ENCODE measurements at regions of chr1 and their contacts with region 1.

Region 1: GRCh38 chr1:164914208-164914607 is 355.2 kb downstream of the PBX1 start:
- DNase-seq: no peak
- ATAC-seq: peak; percentile 79 to 84 (median 83)
- H3K4me3 ChIP-seq: no peak overlapping the region
- H3K27ac ChIP-seq: no peak overlapping the region
- H3K4me1 ChIP-seq: peaks cover 0 to 13% (median 0%) of the 10 kb centered on the region in 12 donors
- H3K27me3 ChIP-seq: no peaks in the 10 kb centered on the region
- CTCF ChIP-seq: peak in 9 of 12 donors; percentile 31 to 54 (median 43)
- POLR2A ChIP-seq: no peak

Region 2: GRCh38 chr1:163561580-163562295 is 1352.5 kb before region 1 on chr1:
- intact Hi-C with region 1: loop called in 1 of 10 experiments (anchors 10 kb)
- DNase-seq: no peak
- ATAC-seq: peak in 2 of 4 donors; percentile 47 to 63
- H3K4me3 ChIP-seq: no peak overlapping the region
- H3K27ac ChIP-seq: no peak overlapping the region
- H3K4me1 ChIP-seq: no peaks in the 10 kb centered on the region
- H3K27me3 ChIP-seq: no peaks in the 10 kb centered on the region
- CTCF ChIP-seq: peak in 11 of 12 donors; percentile 23 to 64 (median 46)
- POLR2A ChIP-seq: no peak

Region 3: GRCh38 chr1:164558461-164559341 is 355.5 kb before region 1 on chr1 and contains the start of gene PBX1:
- intact Hi-C with region 1: loop called in 2 of 10 experiments (anchors 2 to 10 kb)
- DNase-seq: peak; percentile 97 to 99 (median 98)
- ATAC-seq: peak; percentile 98 to 100 (median 99)
- H3K4me3 ChIP-seq: peak within 1 kb of the TSS; percentile 58 to 88 (median 73)
- H3K27ac ChIP-seq: peak within 1 kb of the TSS; percentile 58 to 87 (median 84)
- H3K4me1 ChIP-seq: peaks cover 0 to 13% (median 5%) of the 10 kb centered on the region in 12 donors
- H3K27me3 ChIP-seq: peaks cover 0 to 6% (median 0%) of the 10 kb centered on the region in 9 donors
- CTCF ChIP-seq: no peak
- POLR2A ChIP-seq: peak in 1 of 2 donors; percentile 91
- total RNA-seq, gene PBX1: 24.0 to 78.2 (median 59.8) TPM

Region 4: GRCh38 chr1:164637461-164638375 is 276.5 kb before region 1 on chr1:
- intact Hi-C with region 1: loop called in 1 of 10 experiments (anchors 10 kb)
- DNase-seq: peak; percentile 56 to 81 (median 63)
- ATAC-seq: peak; percentile 63 to 81 (median 78)
- H3K4me3 ChIP-seq: no peak overlapping the region
- H3K27ac ChIP-seq: peak overlapping the region; percentile 56 to 91 (median 81)
- H3K4me1 ChIP-seq: peaks cover 0 to 89% (median 66%) of the 10 kb centered on the region in 12 donors
- H3K27me3 ChIP-seq: no peaks in the 10 kb centered on the region
- CTCF ChIP-seq: no peak
- POLR2A ChIP-seq: no peak

Region 5: DNA sequence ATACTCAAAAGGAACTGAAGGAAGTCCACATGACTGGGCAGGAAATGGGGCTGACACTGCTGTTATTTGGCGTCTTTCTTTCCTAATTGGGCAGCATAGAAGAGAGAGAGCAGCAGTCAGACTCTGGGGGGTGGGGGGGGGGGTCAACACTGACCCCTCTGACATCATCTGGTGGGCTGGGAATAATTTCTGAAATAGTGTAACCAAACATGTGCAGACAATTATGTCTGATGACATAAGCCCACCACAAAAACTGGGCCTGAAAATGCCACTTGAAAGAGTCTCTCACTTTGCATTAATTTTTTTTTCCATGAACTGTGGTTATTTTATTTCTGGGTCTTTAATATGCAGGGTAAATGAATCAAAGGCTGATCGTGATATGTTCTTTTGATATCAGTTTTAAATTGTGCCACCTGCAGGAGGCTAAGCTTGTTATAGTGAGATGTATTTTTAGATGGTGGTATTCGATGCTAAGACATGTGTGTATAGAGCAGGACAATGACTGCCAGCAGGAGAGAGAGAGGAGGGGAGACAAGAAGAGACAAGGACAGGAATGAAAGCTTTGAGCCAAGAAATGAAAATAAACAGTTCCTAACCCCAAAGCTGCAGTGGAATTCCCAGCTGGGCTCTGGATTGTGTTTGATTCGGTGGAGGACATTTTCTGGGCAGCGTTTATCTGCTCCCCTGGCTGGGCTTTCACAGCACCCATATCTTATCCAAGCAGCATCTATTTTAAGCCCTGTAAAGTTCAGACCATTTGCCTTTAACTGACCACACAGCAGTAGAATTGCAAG is 90.5 kb before region 1 on chr1:
- intact Hi-C with region 1: loop called in 2 of 10 experiments (anchors 2 to 5 kb)
- DNase-seq: peak in 4 of 5 donors; percentile 40 to 55 (median 49)
- ATAC-seq: peak; percentile 85 to 93 (median 89)
- H3K4me3 ChIP-seq: no peak overlapping the region
- H3K27ac ChIP-seq: peak overlapping the region; percentile 1 to 84 (median 68)
- H3K4me1 ChIP-seq: peaks cover 0 to 30% (median 9%) of the 10 kb centered on the region in 12 donors
- H3K27me3 ChIP-seq: no peaks in the 10 kb centered on the region
- CTCF ChIP-seq: peak in 3 of 12 donors; percentile 12 to 24 (median 23)
- POLR2A ChIP-seq: no peak

Region 6: DNA sequence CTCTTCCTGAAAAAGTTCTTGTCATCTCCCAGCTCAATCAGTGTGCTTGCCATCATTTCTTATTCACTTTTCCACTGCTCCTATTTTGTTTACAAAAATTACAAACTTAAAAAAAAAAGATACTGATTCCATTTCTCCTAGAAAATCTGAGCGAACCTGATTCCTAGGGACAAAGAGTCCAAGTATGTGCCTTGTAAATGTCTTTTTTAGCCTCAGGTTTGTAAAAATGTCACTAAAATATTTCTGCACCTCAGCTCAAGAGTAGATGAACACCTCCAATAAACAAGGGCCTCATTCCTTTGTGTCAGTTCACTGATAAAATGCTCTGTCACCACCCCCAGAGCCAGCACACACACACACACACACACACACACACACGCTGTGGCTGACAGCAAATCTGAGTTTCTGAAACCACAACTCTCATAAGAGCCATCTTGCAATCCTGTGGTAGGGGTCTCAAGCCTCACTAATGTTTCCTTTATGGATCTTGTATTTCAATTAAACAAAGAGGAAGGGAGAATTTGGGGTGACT is 56.0 kb before region 1 on chr1:
- intact Hi-C with region 1: no loop called
- DNase-seq: peak in 4 of 5 donors; percentile 19 to 55 (median 36)
- ATAC-seq: peak; percentile 52 to 70 (median 66)
- H3K4me3 ChIP-seq: no peak overlapping the region
- H3K27ac ChIP-seq: peak overlapping the region in 9 of 12 donors; percentile 1 to 64 (median 48)
- H3K4me1 ChIP-seq: peaks cover 8 to 38% (median 22%) of the 10 kb centered on the region in 12 donors
- H3K27me3 ChIP-seq: no peaks in the 10 kb centered on the region
- CTCF ChIP-seq: no peak
- POLR2A ChIP-seq: no peak

Region 7: DNA sequence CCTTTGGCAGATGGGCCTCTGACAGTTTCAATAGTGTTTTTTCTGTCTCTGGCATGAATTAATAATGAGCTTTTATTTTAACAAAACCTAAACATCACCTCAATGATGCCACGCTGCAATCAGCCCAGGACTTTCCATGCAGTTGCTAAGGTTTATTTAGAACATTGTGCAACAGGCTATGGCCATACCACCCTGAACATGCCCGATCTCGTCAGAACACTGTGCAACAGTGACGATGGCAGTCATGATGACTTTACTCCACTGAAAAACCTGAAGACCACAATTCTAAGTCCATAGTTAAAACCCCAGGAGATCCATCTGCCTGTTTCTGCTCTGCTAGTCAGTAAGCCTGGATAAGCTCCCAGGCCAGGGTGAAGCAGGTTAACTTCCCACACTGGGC is 45.2 kb before region 1 on chr1:
- intact Hi-C with region 1: loop called in 1 of 10 experiments (anchors 5 kb)
- DNase-seq: no peak
- ATAC-seq: no peak
- H3K4me3 ChIP-seq: no peak overlapping the region
- H3K27ac ChIP-seq: no peak overlapping the region
- H3K4me1 ChIP-seq: peaks cover 0 to 12% (median 0%) of the 10 kb centered on the region in 12 donors
- H3K27me3 ChIP-seq: no peaks in the 10 kb centered on the region
- CTCF ChIP-seq: no peak
- POLR2A ChIP-seq: no peak

Region 8: DNA sequence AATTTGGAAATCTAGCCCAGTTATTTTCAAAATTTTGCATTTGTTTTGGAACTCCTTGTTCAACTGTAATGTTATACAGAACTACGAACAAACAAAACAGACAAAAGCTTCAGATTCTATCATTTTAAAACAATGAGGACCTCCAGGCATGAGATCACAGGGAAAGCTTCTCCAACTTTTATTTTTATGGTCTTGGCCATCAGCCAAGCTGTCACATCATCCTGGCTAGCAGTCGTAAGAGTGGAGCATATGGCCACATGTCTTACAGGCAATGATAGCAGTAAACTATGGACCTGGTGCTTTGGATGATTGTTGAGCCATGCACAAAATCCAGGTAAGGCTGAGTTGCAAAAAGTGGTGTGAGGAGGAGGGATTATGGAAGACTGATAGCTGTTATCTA is 142.7 kb after region 1 on chr1:
- intact Hi-C with region 1: no loop called
- DNase-seq: no peak
- ATAC-seq: no peak
- H3K4me3 ChIP-seq: no peak overlapping the region
- H3K27ac ChIP-seq: no peak overlapping the region
- H3K4me1 ChIP-seq: no peaks in the 10 kb centered on the region
- H3K27me3 ChIP-seq: no peaks in the 10 kb centered on the region
- CTCF ChIP-seq: no peak
- POLR2A ChIP-seq: no peak